Caco-2 (cell line): ENCODE measurements at regions of chr18 and their contacts with region 1.

Region 1: GRCh38 chr18:39724652-39725051 is 2159.1 kb upstream of the CELF4 start:
- DNase-seq: no peak
- H3K4me3 ChIP-seq: no peak overlapping the region
- H3K4me3 Mint-ChIP-seq: no peak overlapping the region
- H3K27ac Mint-ChIP-seq: no peak overlapping the region
- H3K4me1 ChIP-seq: no peaks in the 10 kb centered on the region
- H3K4me1 Mint-ChIP-seq: no peaks in the 10 kb centered on the region
- H3K27me3 ChIP-seq: no peaks in the 10 kb centered on the region
- H3K27me3 Mint-ChIP-seq: no peaks in the 10 kb centered on the region
- CTCF ChIP-seq: no peak

Region 2: GRCh38 chr18:39781565-39781964 is 56.9 kb after region 1 on chr18:
- CTCF ChIA-PET with region 1: no interaction called
- POLR2A ChIA-PET with region 1: no interaction called
- intact Hi-C with region 1: loop called (anchors 2 kb)
- DNase-seq: no peak
- H3K4me3 ChIP-seq: no peak overlapping the region
- H3K4me3 Mint-ChIP-seq: no peak overlapping the region
- H3K27ac Mint-ChIP-seq: no peak overlapping the region
- H3K4me1 ChIP-seq: no peaks in the 10 kb centered on the region
- H3K4me1 Mint-ChIP-seq: no peaks in the 10 kb centered on the region
- H3K27me3 ChIP-seq: no peaks in the 10 kb centered on the region
- H3K27me3 Mint-ChIP-seq: no peaks in the 10 kb centered on the region
- CTCF ChIP-seq: no peak